OCI-LY7 (cell line): ENCODE measurements at regions of chr4 and their contacts with region 1.

Region 1: GRCh38 chr4:26826721-26827120 is 33.9 kb upstream of the STIM2 start:
- DNase-seq: peak; percentile 96
- H3K4me3 ChIP-seq: peak overlapping the region; percentile 41
- H3K27ac ChIP-seq: peak overlapping the region; percentile 98
- H3K4me1 ChIP-seq: peaks cover 82% of the 10 kb centered on the region
- CTCF ChIP-seq: no peak

Region 2: GRCh38 chr4:25862411-25863346 is 964.0 kb before region 1 on chr4 and contains the start of gene SEL1L3:
- CTCF ChIA-PET with region 1: interaction called, 4 read pairs
- POLR2A ChIA-PET with region 1: interaction called, 44 read pairs
- intact Hi-C with region 1: loop called (anchors 5 kb)
- DNase-seq: peak; percentile 67
- H3K4me3 ChIP-seq: peak within 1 kb of the TSS; percentile 75
- H3K27ac ChIP-seq: peak within 1 kb of the TSS; percentile 99
- H3K4me1 ChIP-seq: peaks cover 69% of the 10 kb centered on the region
- CTCF ChIP-seq: no peak
- total RNA-seq, gene SEL1L3: 173 and 180 TPM in 2 replicates

Region 3: DNA sequence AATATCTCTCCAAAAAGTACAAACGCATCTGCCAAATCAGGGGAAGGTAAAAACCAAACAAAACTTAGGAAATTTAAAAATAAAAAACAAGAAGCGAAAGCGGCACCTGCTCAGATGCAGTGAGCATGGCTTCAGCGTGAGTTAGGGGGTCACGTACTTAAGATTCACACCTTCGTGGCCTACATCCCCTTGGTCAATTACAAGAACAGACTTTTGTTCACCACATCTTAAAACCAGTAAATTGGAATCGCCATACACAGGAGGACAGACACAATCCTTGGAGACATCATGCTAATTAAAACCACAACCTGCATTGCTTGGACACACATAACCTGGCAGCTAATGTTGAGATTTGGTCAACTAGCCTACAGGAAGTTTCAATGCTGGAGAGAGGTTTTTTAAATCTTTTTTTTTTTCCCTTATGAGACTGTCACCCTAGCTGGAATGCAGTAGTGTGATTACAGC is 951.4 kb before region 1 on chr4:
- CTCF ChIA-PET with region 1: no interaction called
- POLR2A ChIA-PET with region 1: interaction called, 44 read pairs
- intact Hi-C with region 1: loop called (anchors 2 kb)
- DNase-seq: peak; percentile 96
- H3K4me3 ChIP-seq: peak overlapping the region; percentile 49
- H3K27ac ChIP-seq: peak overlapping the region; percentile 99
- H3K4me1 ChIP-seq: peaks cover 100% of the 10 kb centered on the region
- CTCF ChIP-seq: no peak

Region 4: GRCh38 chr4:26619784-26620183 is 206.9 kb before region 1 on chr4:
- CTCF ChIA-PET with region 1: no interaction called
- POLR2A ChIA-PET with region 1: no interaction called
- intact Hi-C with region 1: no loop called
- DNase-seq: no peak
- H3K4me3 ChIP-seq: no peak overlapping the region
- H3K27ac ChIP-seq: no peak overlapping the region
- H3K4me1 ChIP-seq: peaks cover 11% of the 10 kb centered on the region
- CTCF ChIP-seq: no peak

Region 5: DNA sequence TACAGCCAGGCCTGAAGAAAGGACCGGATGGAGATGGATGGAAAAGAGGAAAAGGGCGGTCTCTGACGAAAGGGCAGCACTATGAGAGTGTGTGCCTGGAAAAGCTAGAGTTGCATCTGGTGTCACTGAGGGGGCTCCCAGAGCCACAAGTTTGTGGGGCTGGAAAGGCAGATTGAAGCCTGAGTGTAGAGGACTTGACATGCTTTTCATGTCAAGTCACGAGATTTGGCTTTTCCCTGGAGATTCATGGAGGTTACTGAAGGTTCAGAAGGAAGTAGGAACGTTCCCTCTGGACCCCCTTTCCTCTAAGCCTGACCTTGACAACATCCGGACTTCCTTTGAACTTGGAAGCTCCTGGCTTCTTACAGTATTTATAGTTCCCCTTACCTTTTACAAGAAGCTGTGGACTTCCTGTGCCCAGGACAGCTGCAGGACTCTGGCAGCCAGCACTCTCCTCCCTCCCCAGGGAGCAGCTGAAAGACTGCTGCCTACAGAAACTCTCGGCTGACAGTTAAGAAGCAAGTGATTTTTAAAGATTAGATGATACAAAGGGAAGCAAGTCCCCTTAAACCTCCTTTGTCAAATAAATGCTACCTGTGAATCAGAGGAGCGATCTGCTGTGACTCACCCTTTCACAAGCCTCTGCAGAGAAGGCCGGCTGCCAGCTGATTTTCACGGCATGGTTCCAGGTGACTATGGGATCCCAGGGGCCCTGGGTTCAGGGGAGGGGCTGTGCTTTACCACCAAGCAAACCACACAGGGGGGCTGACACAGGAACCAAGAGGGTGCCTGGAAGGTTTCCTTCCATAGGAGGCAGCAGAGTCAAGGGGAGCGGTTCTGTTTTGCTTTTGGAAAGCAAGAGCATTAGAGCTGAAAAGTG is 39.0 kb before region 1 on chr4:
- CTCF ChIA-PET with region 1: interaction called, 4 read pairs
- POLR2A ChIA-PET with region 1: interaction called, 25 read pairs
- intact Hi-C with region 1: loop called (anchors 1 kb)
- DNase-seq: peak; percentile 88
- H3K4me3 ChIP-seq: peak overlapping the region; percentile 59
- H3K27ac ChIP-seq: peak overlapping the region; percentile 84
- H3K4me1 ChIP-seq: peaks cover 42% of the 10 kb centered on the region
- CTCF ChIP-seq: peak; percentile 86

Region 6: DNA sequence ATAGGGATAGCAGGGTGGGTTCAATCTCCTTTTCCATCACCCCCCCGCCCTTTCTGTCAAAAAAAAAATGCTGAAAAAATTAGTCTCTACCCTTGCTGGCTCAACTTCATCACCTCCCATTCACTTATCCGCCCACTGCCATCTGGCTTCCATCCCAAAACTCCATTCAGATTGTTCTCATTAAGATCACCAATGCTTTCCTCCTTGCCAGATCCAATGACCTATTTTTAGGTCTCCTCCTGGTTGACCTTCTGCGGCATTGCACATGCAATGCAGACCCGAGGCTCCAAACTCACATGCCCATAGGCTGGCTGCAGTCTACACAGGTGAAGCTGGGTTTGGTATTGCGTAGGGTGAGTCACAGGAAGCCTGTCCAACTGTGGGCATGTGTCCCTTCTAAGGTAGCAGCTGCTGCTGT is 12.8 kb after region 1 on chr4:
- CTCF ChIA-PET with region 1: interaction called, 3 read pairs
- POLR2A ChIA-PET with region 1: interaction called, 86 read pairs
- intact Hi-C with region 1: no loop called
- DNase-seq: no peak
- H3K4me3 ChIP-seq: no peak overlapping the region
- H3K27ac ChIP-seq: no peak overlapping the region
- H3K4me1 ChIP-seq: peaks cover 59% of the 10 kb centered on the region
- CTCF ChIP-seq: no peak

Region 7: GRCh38 chr4:26871606-26872005 is 44.9 kb after region 1 on chr4:
- CTCF ChIA-PET with region 1: no interaction called
- POLR2A ChIA-PET with region 1: interaction called, 34 read pairs
- intact Hi-C with region 1: no loop called
- DNase-seq: no peak
- H3K4me3 ChIP-seq: no peak overlapping the region
- H3K27ac ChIP-seq: no peak overlapping the region
- H3K4me1 ChIP-seq: peaks cover 59% of the 10 kb centered on the region
- CTCF ChIP-seq: no peak

Region 8: GRCh38 chr4:27010334-27010940 is 183.7 kb after region 1 on chr4:
- CTCF ChIA-PET with region 1: interaction called, 5 read pairs
- POLR2A ChIA-PET with region 1: interaction called, 187 read pairs
- intact Hi-C with region 1: loop called (anchors 1 kb)
- DNase-seq: peak; percentile 78
- H3K4me3 ChIP-seq: no peak overlapping the region
- H3K27ac ChIP-seq: peak overlapping the region; percentile 44
- H3K4me1 ChIP-seq: peaks cover 74% of the 10 kb centered on the region
- CTCF ChIP-seq: peak; percentile 94